SK-N-SH (cell line): ENCODE measurements at regions of chr5 and their contacts with region 1.

Region 1: GRCh38 chr5:62460578-62460983 is 48.0 kb downstream of the IPO11 start:
- DNase-seq: peak; percentile 41
- H3K4me3 ChIP-seq: no peak overlapping the region; a peak in 1 of 4 replicates
- H3K27ac ChIP-seq: no peak overlapping the region
- H3K4me1 ChIP-seq: peaks cover 0 to 11% of the 10 kb centered on the region in 2 experiments; a peak in 1 of 4 replicates
- H3K27me3 ChIP-seq: no peaks in the 10 kb centered on the region
- CTCF ChIP-seq: peak; percentile 97
- EP300 ChIP-seq: no peak
- RAD21 ChIP-seq: peak; percentile 81

Region 2: DNA sequence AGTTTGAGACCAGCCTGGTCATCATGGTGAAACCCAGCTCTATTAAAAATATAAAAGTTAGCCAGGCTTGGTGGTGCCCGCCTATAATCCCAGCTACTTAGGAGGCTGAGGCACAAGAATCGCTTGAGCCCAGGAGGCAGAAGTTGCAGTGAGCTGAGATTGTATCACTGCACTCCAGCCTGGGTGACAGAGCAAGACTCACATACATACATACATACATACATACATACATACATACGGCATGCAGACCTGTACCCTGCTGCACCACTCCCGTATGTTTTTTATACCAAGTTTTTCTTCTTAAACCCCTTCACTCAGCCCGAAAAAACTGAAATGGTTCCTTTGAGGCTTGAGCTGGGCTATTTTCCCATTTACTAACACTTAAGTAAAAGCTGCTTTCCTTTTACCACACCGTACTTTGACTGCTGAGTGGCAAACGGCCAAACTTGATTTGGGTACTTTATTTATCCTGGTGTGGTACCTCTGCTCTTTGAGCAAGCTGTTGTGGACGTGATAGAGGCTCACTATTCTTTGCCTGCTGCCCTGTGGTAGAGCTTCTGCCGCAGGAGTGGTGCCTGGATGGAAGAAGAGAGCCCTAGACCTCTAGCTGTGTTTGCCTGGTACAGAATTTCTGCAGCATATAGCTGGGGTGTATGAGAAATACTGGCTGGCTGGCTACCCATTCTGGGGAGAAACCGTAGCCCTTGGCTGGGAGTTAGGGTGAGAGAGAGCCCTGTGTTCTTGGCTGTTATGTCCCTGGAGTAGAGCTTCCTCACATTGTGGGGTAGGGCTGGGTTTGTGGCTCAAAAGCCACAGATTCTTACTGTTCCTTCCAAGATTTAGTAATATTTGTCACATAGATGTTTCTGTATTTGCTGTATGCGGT is 28.6 kb before region 1 on chr5:
- CTCF ChIA-PET with region 1: interaction called, 14 read pairs
- POLR2A ChIA-PET with region 1: no interaction called
- DNase-seq: no peak
- H3K4me3 ChIP-seq: no peak overlapping the region
- H3K27ac ChIP-seq: no peak overlapping the region
- H3K4me1 ChIP-seq: no peaks in the 10 kb centered on the region; a peak in 2 of 4 replicates
- H3K27me3 ChIP-seq: no peaks in the 10 kb centered on the region
- CTCF ChIP-seq: no peak
- EP300 ChIP-seq: no peak
- RAD21 ChIP-seq: no peak

Region 3: DNA sequence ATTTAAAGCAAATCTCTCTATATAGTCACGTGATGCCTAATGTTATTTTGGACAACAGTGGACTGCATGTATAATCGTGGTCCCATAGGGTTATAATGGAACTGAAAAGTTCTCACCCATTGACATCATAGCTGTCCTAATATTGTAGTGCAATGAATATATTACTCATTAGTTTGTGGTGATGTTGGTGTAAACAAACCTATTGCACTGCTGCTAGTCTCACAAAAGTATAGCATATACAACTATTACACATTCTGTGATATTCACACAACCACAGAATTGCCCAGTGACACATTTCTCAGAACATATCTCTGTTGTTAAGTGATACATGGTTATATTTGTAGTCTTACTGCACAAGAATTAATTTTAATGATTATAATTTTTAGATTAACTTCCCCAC is 10.3 kb before region 1 on chr5:
- CTCF ChIA-PET with region 1: interaction called, 48 read pairs
- POLR2A ChIA-PET with region 1: no interaction called
- DNase-seq: no peak
- H3K4me3 ChIP-seq: no peak overlapping the region
- H3K27ac ChIP-seq: no peak overlapping the region
- H3K4me1 ChIP-seq: no peaks in the 10 kb centered on the region
- H3K27me3 ChIP-seq: no peaks in the 10 kb centered on the region
- CTCF ChIP-seq: no peak
- EP300 ChIP-seq: no peak
- RAD21 ChIP-seq: no peak

Region 4: GRCh38 chr5:62475072-62475471 is 14.5 kb after region 1 on chr5:
- CTCF ChIA-PET with region 1: interaction called, 23 read pairs
- POLR2A ChIA-PET with region 1: no interaction called
- DNase-seq: no peak
- H3K4me3 ChIP-seq: no peak overlapping the region
- H3K27ac ChIP-seq: peak overlapping the region in 1 of 2 experiments; percentile 49; a peak in 2 of 4 replicates
- H3K4me1 ChIP-seq: 0 out of 4 replicates have a peak, but pooled peaks cover 0 to 5% of the 10 kb centered on the region in 2 experiments
- H3K27me3 ChIP-seq: no peaks in the 10 kb centered on the region
- CTCF ChIP-seq: no peak
- EP300 ChIP-seq: no peak
- RAD21 ChIP-seq: no peak

Region 5: GRCh38 chr5:62483556-62483955 is 23.0 kb after region 1 on chr5:
- CTCF ChIA-PET with region 1: interaction called, 19 read pairs
- POLR2A ChIA-PET with region 1: no interaction called
- DNase-seq: no peak
- H3K4me3 ChIP-seq: no peak overlapping the region
- H3K27ac ChIP-seq: no peak overlapping the region
- H3K4me1 ChIP-seq: no peaks in the 10 kb centered on the region
- H3K27me3 ChIP-seq: no peaks in the 10 kb centered on the region
- CTCF ChIP-seq: no peak
- EP300 ChIP-seq: no peak
- RAD21 ChIP-seq: no peak

Region 6: DNA sequence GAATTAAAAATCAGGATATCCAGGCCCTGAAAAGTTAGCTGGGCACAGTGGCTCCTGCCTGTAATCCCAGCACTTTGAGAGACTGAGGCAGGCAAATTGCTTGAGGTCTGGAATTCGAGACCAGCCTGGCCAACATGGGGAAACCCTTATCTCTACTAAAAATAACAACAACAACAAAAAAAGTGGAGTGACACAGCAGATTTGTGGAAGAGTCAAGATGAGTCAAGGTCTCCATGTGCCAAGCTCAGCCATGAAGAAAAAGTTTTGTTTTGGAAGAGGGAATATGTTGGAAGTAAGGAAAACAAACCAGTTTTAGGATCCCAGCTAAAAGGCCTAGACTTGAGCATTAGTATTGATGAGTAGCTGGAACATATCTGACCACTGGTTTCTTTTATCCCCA is 132.8 kb after region 1 on chr5:
- CTCF ChIA-PET with region 1: no interaction called
- POLR2A ChIA-PET with region 1: no interaction called
- DNase-seq: no peak
- H3K4me3 ChIP-seq: no peak overlapping the region
- H3K27ac ChIP-seq: no peak overlapping the region
- H3K4me1 ChIP-seq: no peaks in the 10 kb centered on the region
- H3K27me3 ChIP-seq: no peaks in the 10 kb centered on the region
- CTCF ChIP-seq: no peak
- EP300 ChIP-seq: no peak
- RAD21 ChIP-seq: no peak

Region 7: DNA sequence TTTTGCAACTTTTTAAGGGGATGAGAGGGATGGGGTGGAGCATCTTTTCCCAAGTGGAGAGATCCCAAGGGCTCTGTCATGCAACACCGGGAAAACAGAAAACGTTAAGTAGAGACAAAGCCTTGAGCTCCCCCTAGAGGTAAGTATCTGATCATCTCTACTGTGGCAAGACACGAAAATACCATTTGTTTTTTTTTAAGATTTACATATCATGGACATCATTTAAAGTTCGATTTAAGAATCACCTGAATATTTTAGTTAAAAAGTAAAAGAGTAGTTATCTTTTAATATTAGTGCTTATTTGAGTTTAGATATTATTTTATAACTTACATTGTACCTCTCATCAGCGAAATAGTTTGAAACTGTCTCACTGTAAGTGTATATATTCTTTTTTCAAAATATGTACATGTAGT is 318.4 kb after region 1 on chr5:
- CTCF ChIA-PET with region 1: interaction called, 51 read pairs
- POLR2A ChIA-PET with region 1: no interaction called
- DNase-seq: peak; percentile 77
- H3K4me3 ChIP-seq: no peak overlapping the region
- H3K27ac ChIP-seq: no peak overlapping the region
- H3K4me1 ChIP-seq: no peaks in the 10 kb centered on the region
- H3K27me3 ChIP-seq: no peaks in the 10 kb centered on the region
- CTCF ChIP-seq: peak; percentile 80
- EP300 ChIP-seq: no peak
- RAD21 ChIP-seq: peak; percentile 86